ENCODE measurements at regions of chr1 and their contacts with region 1.

Region 1: GRCh38 chr1:53945433-53946251 is at the start of gene IFT25:
- DNase-seq: peak; percentile 100
- ATAC-seq: peak; percentile 81
- H3K4me3 Mint-ChIP-seq: peak within 1 kb of the TSS; percentile 98
- H3K27ac Mint-ChIP-seq: peak within 1 kb of the TSS; percentile 92
- H3K4me1 Mint-ChIP-seq: peaks cover 37% of the 10 kb centered on the region
- H3K27me3 Mint-ChIP-seq: no peaks in the 10 kb centered on the region
- CTCF ChIP-seq: no peak
- total RNA-seq, gene IFT25: 38.0 and 41.0 TPM in 2 replicates

Region 2: GRCh38 chr1:53837924-53838652 is 107.6 kb before region 1 on chr1 and contains the start of gene NDC1:
- CTCF ChIA-PET with region 1: no interaction called
- POLR2A ChIA-PET with region 1: interaction called, 12 read pairs
- intact Hi-C with region 1: loop called (anchors 1 kb)
- DNase-seq: peak; percentile 86
- ATAC-seq: peak; percentile 89
- H3K4me3 Mint-ChIP-seq: peak within 1 kb of the TSS; percentile 94
- H3K27ac Mint-ChIP-seq: peak within 1 kb of the TSS; percentile 98
- H3K4me1 Mint-ChIP-seq: peaks cover 33% of the 10 kb centered on the region
- H3K27me3 Mint-ChIP-seq: no peaks in the 10 kb centered on the region
- CTCF ChIP-seq: no peak
- total RNA-seq, gene NDC1: 10.6 and 14.0 TPM in 2 replicates

Region 3: DNA sequence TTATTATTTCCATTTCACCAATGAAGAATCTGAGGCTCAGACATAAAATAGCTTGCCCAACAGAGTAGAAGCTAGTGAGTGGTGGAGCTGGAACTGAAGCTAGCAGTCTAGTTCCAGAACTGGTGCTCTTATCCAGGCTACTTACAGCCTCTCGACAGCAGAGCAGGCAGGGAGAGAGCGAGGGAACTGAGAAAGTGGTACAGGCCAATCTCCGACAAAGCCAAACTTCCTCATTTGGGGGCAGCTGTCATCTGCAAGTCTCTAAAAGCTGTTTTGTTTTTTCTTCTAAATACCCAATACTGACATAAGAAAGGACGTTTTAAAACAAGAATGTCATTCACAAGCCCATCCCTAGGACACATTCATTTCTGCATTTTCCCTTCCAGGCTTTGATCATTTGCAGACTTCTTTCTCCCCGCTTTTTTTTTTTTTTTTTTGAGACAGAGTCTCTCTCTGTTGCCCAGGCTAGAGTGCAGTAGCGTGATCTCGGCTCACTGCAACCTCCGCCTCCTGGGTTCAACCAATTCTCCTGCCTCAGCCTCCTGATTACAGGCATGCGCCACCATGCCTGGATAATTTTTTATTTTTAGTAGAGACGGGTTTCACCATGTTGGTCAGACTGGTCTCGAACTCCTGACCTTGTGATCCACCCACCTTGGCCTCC is 76.1 kb before region 1 on chr1:
- CTCF ChIA-PET with region 1: interaction called, 3 read pairs
- POLR2A ChIA-PET with region 1: interaction called, 12 read pairs
- intact Hi-C with region 1: no loop called
- DNase-seq: no peak
- ATAC-seq: peak; percentile 81
- H3K4me3 Mint-ChIP-seq: no peak overlapping the region
- H3K27ac Mint-ChIP-seq: peak overlapping the region; percentile 53
- H3K4me1 Mint-ChIP-seq: peaks cover 9% of the 10 kb centered on the region
- H3K27me3 Mint-ChIP-seq: no peaks in the 10 kb centered on the region
- CTCF ChIP-seq: no peak

Region 4: GRCh38 chr1:53889304-53890298 is 56.0 kb before region 1 on chr1 and contains the start of gene YIPF1:
- CTCF ChIA-PET with region 1: interaction called, 5 read pairs
- POLR2A ChIA-PET with region 1: interaction called, 37 read pairs
- intact Hi-C with region 1: loop called (anchors 1 kb)
- DNase-seq: peak; percentile 81
- ATAC-seq: peak; percentile 98
- H3K4me3 Mint-ChIP-seq: peak within 1 kb of the TSS; percentile 98
- H3K27ac Mint-ChIP-seq: peak within 1 kb of the TSS; percentile 94
- H3K4me1 Mint-ChIP-seq: peaks cover 40% of the 10 kb centered on the region
- H3K27me3 Mint-ChIP-seq: no peaks in the 10 kb centered on the region
- CTCF ChIP-seq: no peak
- total RNA-seq, gene YIPF1: 16.6 and 18.5 TPM in 2 replicates

Region 5: GRCh38 chr1:54052934-54053744 is 107.5 kb after region 1 on chr1 and contains the starts of genes TCEANC2 and TMEM59:
- CTCF ChIA-PET with region 1: no interaction called
- POLR2A ChIA-PET with region 1: interaction called, 15 read pairs
- intact Hi-C with region 1: loop called (anchors 1 kb)
- DNase-seq: peak; percentile 92
- ATAC-seq: peak; percentile 92
- H3K4me3 Mint-ChIP-seq: no peak within 1 kb of the TSS
- H3K27ac Mint-ChIP-seq: no peak within 1 kb of the TSS
- H3K4me1 Mint-ChIP-seq: peaks cover 38% of the 10 kb centered on the region
- H3K27me3 Mint-ChIP-seq: no peaks in the 10 kb centered on the region
- CTCF ChIP-seq: no peak
- total RNA-seq, gene TCEANC2: 7.3 and 8.1 TPM in 2 replicates
- total RNA-seq, gene TMEM59: 103 and 123 TPM in 2 replicates

Region 6: DNA sequence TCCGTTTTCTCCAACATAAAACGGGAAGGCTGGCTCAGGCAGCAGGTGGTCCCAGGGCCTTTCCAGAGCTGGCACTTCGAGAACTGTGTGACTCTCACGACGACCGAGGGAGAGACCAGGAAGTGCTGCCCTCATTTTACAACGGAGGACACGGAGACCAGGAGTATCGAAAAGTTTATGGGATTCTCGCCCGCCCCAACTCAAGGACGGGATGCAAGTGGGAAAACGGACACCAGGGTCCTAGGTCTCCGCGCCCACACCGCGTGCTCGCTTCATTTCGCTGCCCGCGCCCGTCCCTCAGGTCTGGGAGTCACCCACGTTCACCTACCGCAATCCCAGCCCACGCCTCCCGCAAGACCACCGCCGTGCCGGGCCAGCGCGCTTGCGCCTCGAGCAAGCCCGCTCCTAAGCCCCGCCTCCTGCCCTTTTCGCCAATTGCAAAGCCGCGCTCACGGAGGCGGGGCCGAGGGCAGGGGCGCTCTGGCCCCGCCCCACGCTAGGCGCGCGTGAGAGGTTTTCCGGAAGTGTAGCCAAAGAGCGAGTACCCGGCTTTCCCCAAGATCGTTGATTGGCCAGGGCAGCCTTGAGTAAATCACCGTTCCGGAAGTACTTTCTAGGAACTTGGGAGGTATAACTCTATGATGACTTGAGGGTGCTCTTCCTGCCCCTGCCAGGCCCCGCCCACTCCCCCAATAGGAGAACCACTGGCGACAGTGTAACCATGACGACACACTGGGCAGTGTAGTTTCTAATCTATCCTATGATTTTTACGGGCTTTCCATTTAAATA is 818.7 kb after region 1 on chr1 and contains the start of gene PARS2:
- CTCF ChIA-PET with region 1: no interaction called
- POLR2A ChIA-PET with region 1: interaction called, 4 read pairs
- intact Hi-C with region 1: loop called (anchors 1 kb)
- DNase-seq: peak; percentile 91
- ATAC-seq: peak; percentile 92
- H3K4me3 Mint-ChIP-seq: peak within 1 kb of the TSS; percentile 90
- H3K27ac Mint-ChIP-seq: peak within 1 kb of the TSS; percentile 89
- H3K4me1 Mint-ChIP-seq: peaks cover 24% of the 10 kb centered on the region
- H3K27me3 Mint-ChIP-seq: no peaks in the 10 kb centered on the region
- CTCF ChIP-seq: no peak
- total RNA-seq, gene PARS2: 4.3 and 4.8 TPM in 2 replicates